Endothelial cell of umbilical vein (primary cell): ENCODE measurements at regions of chr4 and their contacts with region 1.

Region 1: DNA sequence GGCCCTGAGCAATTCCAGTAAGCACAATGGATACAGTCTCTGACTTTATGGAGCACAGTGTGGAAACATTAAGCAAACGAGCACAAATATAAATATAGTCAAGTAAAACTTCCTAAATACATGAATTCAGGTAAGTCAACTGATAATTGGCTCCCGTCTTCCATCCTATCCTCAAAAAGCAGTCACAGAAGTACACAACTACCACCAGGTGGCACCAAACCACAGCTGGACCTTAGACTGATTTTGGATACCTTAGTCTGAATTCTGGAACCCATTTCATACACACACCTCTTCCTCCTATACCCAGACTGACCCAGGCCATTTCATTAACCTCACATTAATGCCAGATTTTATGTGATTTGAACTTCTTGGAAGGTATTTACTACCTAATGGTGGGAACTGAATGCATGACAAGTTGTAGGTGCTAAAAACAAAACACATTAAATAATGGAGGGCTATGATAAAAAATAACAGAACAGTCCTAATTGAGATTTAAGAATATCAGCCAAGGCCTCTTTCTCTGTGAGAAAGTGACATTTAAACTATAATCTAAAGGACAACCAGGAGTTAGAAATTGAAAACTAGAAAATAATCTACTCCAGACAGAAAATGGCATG is 77.5 kb downstream of the ELF2 start:
- DNase-seq: peak; percentile 79
- H3K4me3 ChIP-seq: no peak overlapping the region
- H3K27ac ChIP-seq: no peak overlapping the region
- H3K4me1 ChIP-seq: no peaks in the 10 kb centered on the region
- H3K27me3 ChIP-seq: no peaks in the 10 kb centered on the region
- CTCF ChIP-seq: peak; percentile 76 to 77
- POLR2A ChIP-seq: no peak

Region 2: GRCh38 chr4:139083956-139084803 is 15.3 kb before region 1 on chr4:
- CTCF ChIA-PET with region 1: interaction called, 18 read pairs
- POLR2A ChIA-PET with region 1: interaction called, 4 read pairs
- dilution Hi-C with region 1: no loop called
- intact Hi-C with region 1: no loop called
- DNase-seq: peak; percentile 91
- H3K4me3 ChIP-seq: peak overlapping the region; percentile 65 to 100 (median 92)
- H3K27ac ChIP-seq: peak overlapping the region; percentile 85
- H3K4me1 ChIP-seq: peaks cover 19% of the 10 kb centered on the region
- H3K27me3 ChIP-seq: no peaks in the 10 kb centered on the region
- CTCF ChIP-seq: peak in 1 of 2 donors; percentile 32
- POLR2A ChIP-seq: peak; percentile 36

Region 3: GRCh38 chr4:139167774-139168444 is 68.4 kb after region 1 on chr4:
- CTCF ChIA-PET with region 1: interaction called, 26 read pairs
- POLR2A ChIA-PET with region 1: no interaction called
- dilution Hi-C with region 1: no loop called
- intact Hi-C with region 1: loop called (anchors 1 kb)
- DNase-seq: peak; percentile 36
- H3K4me3 ChIP-seq: no peak overlapping the region
- H3K27ac ChIP-seq: no peak overlapping the region
- H3K4me1 ChIP-seq: peaks cover 9% of the 10 kb centered on the region
- H3K27me3 ChIP-seq: no peaks in the 10 kb centered on the region
- CTCF ChIP-seq: peak in 1 of 2 donors; percentile 28
- POLR2A ChIP-seq: no peak

Region 4: GRCh38 chr4:139229534-139230039 is 130.1 kb after region 1 on chr4:
- CTCF ChIA-PET with region 1: interaction called, 21 read pairs
- POLR2A ChIA-PET with region 1: no interaction called
- dilution Hi-C with region 1: no loop called
- intact Hi-C with region 1: loop called (anchors 1 kb)
- DNase-seq: peak; percentile 64
- H3K4me3 ChIP-seq: no peak overlapping the region
- H3K27ac ChIP-seq: no peak overlapping the region
- H3K4me1 ChIP-seq: no peaks in the 10 kb centered on the region
- H3K27me3 ChIP-seq: no peaks in the 10 kb centered on the region
- CTCF ChIP-seq: peak; percentile 36 to 50
- POLR2A ChIP-seq: no peak

Region 5: DNA sequence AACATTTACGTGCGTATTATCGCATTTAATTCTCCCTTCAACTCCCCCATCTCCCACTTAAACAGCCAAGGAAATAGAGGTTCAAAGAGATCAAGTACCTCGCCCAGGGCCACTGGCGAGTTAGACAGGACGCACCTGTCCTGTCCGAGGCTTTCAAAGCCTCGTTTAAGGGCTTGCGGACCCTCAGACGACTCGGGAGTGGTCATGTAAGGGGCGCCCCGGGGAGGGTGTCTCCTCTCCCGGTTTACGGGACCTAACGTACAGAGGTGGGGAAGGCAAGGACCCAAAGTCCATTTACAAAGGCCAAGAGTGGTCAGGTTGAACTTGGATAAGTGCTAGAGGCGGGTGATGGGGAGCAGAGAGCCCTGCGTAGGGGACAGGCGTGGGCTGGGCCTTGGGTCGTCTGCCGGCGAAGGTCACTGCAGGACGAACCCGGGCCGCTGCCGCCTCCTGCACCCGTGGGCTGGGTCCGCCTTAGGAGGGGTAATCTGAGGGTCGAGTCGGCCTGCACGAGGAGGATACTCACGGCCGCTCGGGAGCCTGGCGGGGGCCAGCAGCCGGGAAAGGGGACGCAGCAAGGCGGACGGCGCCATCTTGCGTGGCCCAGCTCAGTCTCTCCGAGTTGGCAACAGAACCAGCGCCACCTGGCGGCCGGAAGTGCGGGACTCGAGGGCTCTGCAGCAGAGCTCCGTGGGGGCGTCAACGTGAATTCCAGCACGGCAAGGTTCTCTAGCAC is 195.9 kb after region 1 on chr4:
- CTCF ChIA-PET with region 1: interaction called, 28 read pairs
- POLR2A ChIA-PET with region 1: no interaction called
- dilution Hi-C with region 1: no loop called
- intact Hi-C with region 1: loop called (anchors 1 kb)
- DNase-seq: peak; percentile 93
- H3K4me3 ChIP-seq: peak overlapping the region; percentile 63 to 87 (median 72)
- H3K27ac ChIP-seq: peak overlapping the region; percentile 65
- H3K4me1 ChIP-seq: peaks cover 20% of the 10 kb centered on the region
- H3K27me3 ChIP-seq: no peaks in the 10 kb centered on the region
- CTCF ChIP-seq: peak; percentile 96 to 97
- POLR2A ChIP-seq: peak; percentile 83

Region 6: DNA sequence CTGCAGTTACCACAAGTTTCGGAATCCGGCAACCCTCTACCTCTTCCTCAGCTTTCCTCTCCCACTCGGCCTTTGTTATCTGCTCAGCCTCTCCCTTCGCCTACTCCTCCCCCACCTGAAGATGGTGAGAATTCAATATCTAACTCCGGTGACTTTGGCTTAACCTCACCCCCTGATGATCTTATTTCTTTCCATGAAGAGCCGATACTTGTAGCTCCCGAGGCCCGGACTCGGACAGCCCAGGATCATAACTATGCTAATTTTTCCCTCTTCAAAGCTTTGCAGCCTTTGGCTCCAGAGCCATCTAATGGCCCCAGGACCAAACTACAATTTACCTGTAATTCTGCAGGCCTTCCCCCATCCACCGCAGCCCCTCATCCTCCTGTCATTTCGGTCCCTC is 534.2 kb after region 1 on chr4:
- CTCF ChIA-PET with region 1: interaction called, 3 read pairs
- POLR2A ChIA-PET with region 1: no interaction called
- dilution Hi-C with region 1: no loop called
- intact Hi-C with region 1: loop called (anchors 1 kb)
- DNase-seq: peak; percentile 29
- H3K4me3 ChIP-seq: no peak overlapping the region
- H3K27ac ChIP-seq: no peak overlapping the region
- H3K4me1 ChIP-seq: no peaks in the 10 kb centered on the region
- H3K27me3 ChIP-seq: peaks cover 13 to 14% of the 10 kb centered on the region in 2 experiments
- CTCF ChIP-seq: peak; percentile 11 to 40
- POLR2A ChIP-seq: no peak